Lower leg skin (tissue), 4 donors: ENCODE measurements at regions of chr5 and their contacts with region 1.

Region 1: GRCh38 chr5:32232441-32233219 is 58.5 kb upstream of the GOLPH3 start:
- DNase-seq: peak; percentile 76 to 94
- H3K4me3 ChIP-seq: no peak overlapping the region
- CTCF ChIP-seq: no peak
- POLR2A ChIP-seq: no peak

Region 2: GRCh38 chr5:32044939-32045338 is 187.7 kb before region 1 on chr5:
- intact Hi-C with region 1: no loop called
- DNase-seq: no peak
- H3K4me3 ChIP-seq: no peak overlapping the region
- CTCF ChIP-seq: no peak
- POLR2A ChIP-seq: no peak

Region 3: GRCh38 chr5:32339198-32339597 is 106.6 kb after region 1 on chr5:
- intact Hi-C with region 1: loop called (anchors 10 kb)
- DNase-seq: no peak
- H3K4me3 ChIP-seq: no peak overlapping the region
- CTCF ChIP-seq: no peak
- POLR2A ChIP-seq: no peak

Region 4: GRCh38 chr5:32613050-32613672 is 380.5 kb after region 1 on chr5:
- intact Hi-C with region 1: loop called (anchors 10 kb)
- DNase-seq: peak; percentile 83 to 96
- H3K4me3 ChIP-seq: no peak overlapping the region
- CTCF ChIP-seq: peak in 1 of 3 donors; percentile 62
- POLR2A ChIP-seq: no peak